Panc1 (cell line): ENCODE measurements at regions of chr6 and their contacts with region 1.

Region 1: DNA sequence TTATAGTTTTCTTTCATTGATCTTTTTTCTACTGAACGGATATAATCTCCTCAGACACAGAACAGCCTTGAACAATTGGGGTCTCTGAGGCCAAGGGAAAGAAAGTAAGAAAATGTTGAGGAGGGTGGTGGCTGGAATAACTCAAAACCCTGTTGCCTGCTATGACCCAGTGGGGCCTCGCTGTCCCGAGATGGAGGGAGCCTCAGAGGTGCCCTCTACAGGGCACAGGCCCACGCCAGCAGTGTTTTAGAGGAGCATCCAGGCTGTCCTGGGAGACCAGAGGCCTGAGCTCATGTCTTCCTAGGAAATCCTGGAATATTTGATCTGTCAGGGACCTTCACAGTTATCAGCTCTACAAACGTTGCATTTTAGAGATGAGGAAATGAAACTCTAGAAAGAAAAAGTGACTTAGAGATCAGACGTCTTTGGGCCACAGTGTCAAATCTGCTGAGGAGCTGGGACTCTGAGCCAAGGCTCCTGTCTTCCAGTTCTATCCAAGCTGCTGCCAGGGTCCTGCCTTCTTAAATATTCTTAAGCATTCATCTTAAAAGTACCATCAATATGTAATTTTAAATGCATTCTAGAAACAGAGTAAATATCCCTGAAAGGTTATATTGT is 26.3 kb downstream of the ALDH5A1 start:
- DNase-seq: peak; percentile 28
- ATAC-seq: peak; percentile 97
- H3K4me3 ChIP-seq: no peak overlapping the region
- H3K27ac ChIP-seq: no peak overlapping the region
- H3K4me1 ChIP-seq: no peaks in the 10 kb centered on the region
- H3K27me3 ChIP-seq: no peaks in the 10 kb centered on the region
- CTCF ChIP-seq: peak; percentile 93

Region 2: GRCh38 chr6:24431045-24431451 is 90.0 kb before region 1 on chr6:
- CTCF ChIA-PET with region 1: no interaction called
- POLR2A ChIA-PET with region 1: no interaction called
- in situ Hi-C with region 1: no loop called
- intact Hi-C with region 1: loop called (anchors 5 kb)
- DNase-seq: peak; percentile 30
- ATAC-seq: peak; percentile 89
- H3K4me3 ChIP-seq: no peak overlapping the region
- H3K27ac ChIP-seq: no peak overlapping the region
- H3K4me1 ChIP-seq: no peaks in the 10 kb centered on the region
- H3K27me3 ChIP-seq: no peaks in the 10 kb centered on the region
- CTCF ChIP-seq: peak; percentile 79

Region 3: GRCh38 chr6:24494821-24495795 is 25.9 kb before region 1 on chr6 and contains the start of gene ALDH5A1:
- CTCF ChIA-PET with region 1: interaction called, 16 read pairs
- POLR2A ChIA-PET with region 1: no interaction called
- in situ Hi-C with region 1: no loop called
- intact Hi-C with region 1: no loop called
- DNase-seq: no peak
- ATAC-seq: peak; percentile 88
- H3K4me3 ChIP-seq: peak within 1 kb of the TSS; percentile 53 to 56
- H3K27ac ChIP-seq: no peak within 1 kb of the TSS
- H3K4me1 ChIP-seq: peaks cover 5% of the 10 kb centered on the region; the same call in 1 of the 2 replicates
- H3K27me3 ChIP-seq: peaks cover 6% of the 10 kb centered on the region
- CTCF ChIP-seq: peak; percentile 67
- total RNA-seq, gene ALDH5A1: 4.2 TPM

Region 4: DNA sequence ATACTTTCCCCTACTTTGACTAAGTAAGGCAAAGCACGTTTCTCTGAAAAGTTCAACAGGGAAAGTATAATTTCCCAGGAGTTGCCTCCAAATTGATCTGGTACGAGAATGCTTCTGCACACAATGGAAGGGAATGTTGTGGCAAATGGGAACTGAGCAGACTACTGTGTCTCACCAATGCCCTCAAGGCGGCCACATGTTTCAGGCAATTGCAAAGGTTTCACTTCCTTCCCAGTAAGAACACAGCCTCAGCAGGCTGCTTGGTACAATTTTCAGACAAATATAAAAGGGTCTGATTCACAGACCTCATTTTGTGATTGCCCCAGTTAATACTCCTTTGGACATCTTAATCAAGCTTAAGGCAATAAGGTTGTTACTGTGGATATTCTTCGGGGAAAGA is 53.8 kb after region 1 on chr6:
- CTCF ChIA-PET with region 1: no interaction called
- POLR2A ChIA-PET with region 1: no interaction called
- in situ Hi-C with region 1: no loop called
- intact Hi-C with region 1: loop called (anchors 5 kb)
- DNase-seq: no peak
- ATAC-seq: no peak
- H3K4me3 ChIP-seq: no peak overlapping the region
- H3K27ac ChIP-seq: no peak overlapping the region
- H3K4me1 ChIP-seq: no peaks in the 10 kb centered on the region
- H3K27me3 ChIP-seq: no peaks in the 10 kb centered on the region
- CTCF ChIP-seq: no peak

Region 5: GRCh38 chr6:24666641-24667377 is 145.8 kb after region 1 on chr6 and contains the starts of genes ACOT13 and TDP2:
- CTCF ChIA-PET with region 1: no interaction called
- POLR2A ChIA-PET with region 1: no interaction called
- in situ Hi-C with region 1: no loop called
- intact Hi-C with region 1: no loop called
- DNase-seq: peak; percentile 82
- ATAC-seq: peak; percentile 98
- H3K4me3 ChIP-seq: peak within 1 kb of the TSS; percentile 99 to 100
- H3K27ac ChIP-seq: peak within 1 kb of the TSS; percentile 99
- H3K4me1 ChIP-seq: peaks cover 11% of the 10 kb centered on the region
- H3K27me3 ChIP-seq: no peaks in the 10 kb centered on the region
- CTCF ChIP-seq: peak; percentile 56
- total RNA-seq, gene ACOT13: 31.6 TPM
- total RNA-seq, gene TDP2: 33.6 TPM

Region 6: DNA sequence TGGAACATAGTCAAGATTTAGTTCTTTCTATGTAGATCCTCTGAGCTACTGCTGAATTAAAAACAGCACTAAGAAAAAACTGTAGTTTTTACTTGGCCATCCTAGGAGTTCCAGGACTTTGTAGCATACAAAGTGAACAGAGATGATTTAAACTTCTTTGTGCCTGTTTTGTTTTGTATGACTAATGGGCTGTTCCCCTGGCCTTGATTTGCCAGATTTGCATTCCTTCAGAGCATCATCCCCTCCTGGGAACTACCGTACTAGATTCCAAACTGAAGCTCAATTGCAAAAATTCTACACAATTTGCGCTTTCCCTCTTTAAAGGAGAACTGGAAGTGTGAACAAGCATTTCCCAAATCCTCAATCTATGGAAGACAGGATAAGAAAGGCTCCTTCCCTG is 168.9 kb after region 1 on chr6:
- CTCF ChIA-PET with region 1: no interaction called
- POLR2A ChIA-PET with region 1: no interaction called
- in situ Hi-C with region 1: no loop called
- intact Hi-C with region 1: loop called (anchors 2 kb)
- DNase-seq: no peak
- ATAC-seq: no peak
- H3K4me3 ChIP-seq: no peak overlapping the region
- H3K27ac ChIP-seq: no peak overlapping the region
- H3K4me1 ChIP-seq: peaks cover 3% of the 10 kb centered on the region; the same call in 1 of the 2 replicates
- H3K27me3 ChIP-seq: no peaks in the 10 kb centered on the region
- CTCF ChIP-seq: no peak

Region 7: DNA sequence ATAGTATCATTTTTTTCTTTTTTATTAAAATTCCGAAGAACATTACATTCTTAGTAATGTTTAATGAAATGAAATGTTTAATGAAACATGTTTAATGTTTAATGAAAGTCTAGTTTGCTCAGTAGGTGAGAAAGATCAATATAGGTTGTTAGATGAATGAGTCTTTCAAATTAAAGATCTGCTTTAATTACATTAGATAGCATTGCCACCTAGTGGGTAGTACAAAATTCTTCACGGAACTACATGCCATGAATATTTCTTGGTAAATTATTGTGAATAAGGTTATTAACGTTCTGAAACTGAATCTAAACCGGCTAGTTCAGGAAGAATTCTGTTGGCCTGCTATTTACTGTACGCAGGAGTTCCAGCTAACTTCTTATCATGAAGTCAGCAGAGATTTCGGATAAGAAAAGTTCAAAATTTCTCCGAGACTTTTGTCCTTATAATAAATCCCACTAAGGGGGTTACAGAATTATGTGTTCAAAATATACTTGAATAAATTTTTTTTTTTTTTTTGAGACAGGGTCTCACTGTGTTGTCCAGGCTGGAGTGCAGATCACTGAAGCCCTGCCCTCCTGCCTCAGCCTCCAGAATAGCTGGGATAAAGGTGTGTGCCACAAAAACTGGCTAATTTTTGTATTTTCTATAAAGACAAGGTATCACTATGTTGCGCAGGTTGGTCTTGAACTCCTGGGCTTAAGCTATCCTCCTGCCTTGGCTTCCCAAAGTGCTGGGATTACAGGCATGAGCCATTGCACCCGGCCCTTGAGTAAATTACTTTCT is 245.8 kb after region 1 on chr6:
- CTCF ChIA-PET with region 1: no interaction called
- POLR2A ChIA-PET with region 1: no interaction called
- in situ Hi-C with region 1: no loop called
- intact Hi-C with region 1: loop called (anchors 10 kb)
- DNase-seq: no peak
- ATAC-seq: peak; percentile 74; the same call in 1 of the 2 replicates
- H3K4me3 ChIP-seq: no peak overlapping the region
- H3K27ac ChIP-seq: no peak overlapping the region
- H3K4me1 ChIP-seq: no peaks in the 10 kb centered on the region
- H3K27me3 ChIP-seq: no peaks in the 10 kb centered on the region
- CTCF ChIP-seq: no peak; the same call in 1 of the 2 replicates